B cell (primary cell): ENCODE measurements at regions of chr3 and their contacts with region 1.

Region 1: GRCh38 chr3:168047190-168047795 is 48.4 kb downstream of the GOLIM4 start:
- DNase-seq: peak; percentile 71
- ATAC-seq: peak; percentile 82
- H3K4me3 ChIP-seq: no peak overlapping the region
- H3K4me3 Mint-ChIP-seq: no peak overlapping the region
- H3K27ac ChIP-seq: no peak overlapping the region
- H3K27ac Mint-ChIP-seq: no peak overlapping the region
- H3K4me1 ChIP-seq: no peaks in the 10 kb centered on the region
- H3K4me1 Mint-ChIP-seq: peaks cover 2% of the 10 kb centered on the region
- H3K27me3 ChIP-seq: no peaks in the 10 kb centered on the region
- H3K27me3 Mint-ChIP-seq: no peaks in the 10 kb centered on the region
- CTCF ChIP-seq: peak; percentile 89

Region 2: GRCh38 chr3:167380004-167380689 is 667.1 kb before region 1 on chr3 and contains the start of gene ZBBX:
- CTCF ChIA-PET with region 1: no interaction called
- POLR2A ChIA-PET with region 1: no interaction called
- intact Hi-C with region 1: loop called (anchors 5 kb)
- DNase-seq: peak; percentile 92
- ATAC-seq: peak; percentile 95
- H3K4me3 ChIP-seq: peak within 1 kb of the TSS in 4 of 5 experiments; percentile 33 to 56 (median 48)
- H3K4me3 Mint-ChIP-seq: peak within 1 kb of the TSS; percentile 89
- H3K27ac ChIP-seq: peak within 1 kb of the TSS; percentile 13 to 45
- H3K27ac Mint-ChIP-seq: peak within 1 kb of the TSS; percentile 69
- H3K4me1 ChIP-seq: peaks cover 7 to 8% of the 10 kb centered on the region in 2 donors
- H3K4me1 Mint-ChIP-seq: peaks cover 8% of the 10 kb centered on the region
- H3K27me3 ChIP-seq: peaks cover 0 to 3% (median 0%) of the 10 kb centered on the region in 4 experiments
- H3K27me3 Mint-ChIP-seq: peaks cover 5% of the 10 kb centered on the region
- CTCF ChIP-seq: peak; percentile 91
- total RNA-seq, gene ZBBX: not detected in 2 replicates

Region 3: GRCh38 chr3:168095611-168096209 is 48.4 kb after region 1 on chr3 and contains the start of gene GOLIM4:
- CTCF ChIA-PET with region 1: no interaction called
- POLR2A ChIA-PET with region 1: no interaction called
- intact Hi-C with region 1: loop called (anchors 2 kb)
- DNase-seq: peak; percentile 90
- ATAC-seq: peak; percentile 77
- H3K4me3 ChIP-seq: peak within 1 kb of the TSS; percentile 56 to 82 (median 73)
- H3K4me3 Mint-ChIP-seq: peak within 1 kb of the TSS; percentile 100
- H3K27ac ChIP-seq: peak within 1 kb of the TSS; percentile 38 to 76
- H3K27ac Mint-ChIP-seq: peak within 1 kb of the TSS; percentile 97
- H3K4me1 ChIP-seq: peaks cover 9 to 11% of the 10 kb centered on the region in 2 donors
- H3K4me1 Mint-ChIP-seq: peaks cover 20% of the 10 kb centered on the region
- H3K27me3 ChIP-seq: no peaks in the 10 kb centered on the region
- H3K27me3 Mint-ChIP-seq: no peaks in the 10 kb centered on the region
- CTCF ChIP-seq: no peak
- total RNA-seq, gene GOLIM4: 9.3 and 10.5 TPM in 2 replicates

Region 4: DNA sequence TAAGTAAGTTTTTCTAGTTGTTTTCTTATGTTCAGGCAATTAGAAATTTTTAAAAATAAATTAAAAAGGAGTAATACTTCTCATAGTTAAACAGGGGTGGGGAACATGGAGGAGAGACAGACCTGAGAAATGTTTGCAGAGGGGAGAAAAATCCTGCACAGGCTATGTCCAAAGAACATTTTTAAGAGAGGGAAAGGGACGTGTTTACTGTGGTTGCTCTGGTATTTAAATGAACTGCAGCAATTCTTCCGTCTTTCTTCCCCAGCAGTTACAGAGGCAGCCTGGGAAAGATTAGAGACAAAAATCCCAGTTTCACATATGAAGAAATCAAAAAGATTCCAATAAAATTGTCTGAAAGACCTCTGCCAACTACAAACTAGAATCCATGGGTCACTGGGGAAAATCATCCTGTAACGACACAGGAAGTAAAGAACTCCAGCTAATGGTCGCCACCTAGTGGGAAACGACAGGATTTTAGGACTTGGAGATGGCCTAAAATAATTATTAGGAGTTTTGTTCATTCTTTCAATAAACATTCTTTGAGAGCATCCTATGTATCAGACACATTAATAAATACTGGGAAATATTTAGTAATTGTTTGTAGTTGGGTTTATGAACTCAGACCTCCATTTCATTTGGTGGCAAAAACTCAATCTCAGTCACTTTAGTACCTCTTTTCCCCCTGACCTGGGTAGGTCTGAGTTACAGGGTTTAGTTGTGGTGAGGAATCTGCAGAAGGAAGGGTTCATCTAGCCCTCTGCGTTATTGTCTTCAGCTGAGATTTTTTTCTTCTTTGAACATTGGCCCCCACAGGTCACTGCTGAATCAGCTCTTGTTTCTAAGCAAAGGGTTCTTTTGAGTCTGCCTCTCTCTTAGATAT is 118.3 kb after region 1 on chr3:
- CTCF ChIA-PET with region 1: interaction called, 165 read pairs
- POLR2A ChIA-PET with region 1: no interaction called
- intact Hi-C with region 1: loop called (anchors 1 kb)
- DNase-seq: peak; percentile 66
- ATAC-seq: no peak
- H3K4me3 ChIP-seq: peak overlapping the region in 2 of 5 experiments; percentile 22 to 41
- H3K4me3 Mint-ChIP-seq: peak overlapping the region; percentile 35
- H3K27ac ChIP-seq: no peak overlapping the region
- H3K27ac Mint-ChIP-seq: no peak overlapping the region
- H3K4me1 ChIP-seq: peaks cover 0 to 4% of the 10 kb centered on the region in 2 donors
- H3K4me1 Mint-ChIP-seq: peaks cover 4% of the 10 kb centered on the region
- H3K27me3 ChIP-seq: no peaks in the 10 kb centered on the region
- H3K27me3 Mint-ChIP-seq: peaks cover 2% of the 10 kb centered on the region
- CTCF ChIP-seq: peak; percentile 75